Activated CD4-positive, alpha-beta memory T cell treated with anti-CD3 and anti-CD28 coated beads, Interleukin-2, amount 10 ng/mL, durations not matched to agents 7 days and 5 days (primary cell): ENCODE measurements at regions of chr1 and their contacts with region 1.

Region 1: GRCh38 chr1:58652651-58653184 is 47.1 kb downstream of the MYSM1 start:
- DNase-seq: peak; percentile 58
- H3K4me3 Mint-ChIP-seq: no peak overlapping the region
- H3K27ac Mint-ChIP-seq: no peak overlapping the region
- H3K4me1 Mint-ChIP-seq: peaks cover 23% of the 10 kb centered on the region
- H3K27me3 Mint-ChIP-seq: no peaks in the 10 kb centered on the region

Region 2: DNA sequence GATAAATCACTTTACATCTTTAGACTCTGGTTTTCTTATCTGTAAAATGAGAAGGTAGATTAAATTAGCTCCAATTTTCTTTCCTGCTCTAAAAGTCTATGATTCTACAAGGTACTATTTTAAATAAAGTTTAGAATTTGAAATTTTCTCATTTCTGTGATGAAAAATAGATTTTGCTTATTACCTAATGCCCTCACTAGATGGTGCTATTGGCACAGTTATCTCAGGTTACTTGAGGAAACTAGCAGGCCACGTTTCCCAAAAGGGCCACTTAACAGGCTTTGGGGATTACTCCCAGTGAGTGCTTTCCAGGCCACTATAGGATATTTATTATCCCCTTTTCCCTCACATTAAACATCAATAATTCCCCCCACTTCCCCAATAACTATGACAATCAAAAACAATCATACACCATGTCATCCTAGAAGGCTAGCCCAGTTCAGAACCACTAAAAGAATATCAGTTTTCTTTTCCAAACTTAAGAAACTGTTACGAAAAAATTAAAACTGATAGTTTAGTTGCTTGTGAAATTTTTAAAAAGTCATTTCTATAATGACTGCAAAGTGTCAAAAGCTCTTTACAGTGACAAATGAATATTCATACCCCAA is 136.8 kb before region 1 on chr1:
- CTCF ChIA-PET with region 1: interaction called, 42 read pairs
- POLR2A ChIA-PET with region 1: interaction called, 3 read pairs
- DNase-seq: no peak
- H3K4me3 Mint-ChIP-seq: no peak overlapping the region
- H3K27ac Mint-ChIP-seq: no peak overlapping the region
- H3K4me1 Mint-ChIP-seq: peaks cover 13% of the 10 kb centered on the region
- H3K27me3 Mint-ChIP-seq: no peaks in the 10 kb centered on the region

Region 3: DNA sequence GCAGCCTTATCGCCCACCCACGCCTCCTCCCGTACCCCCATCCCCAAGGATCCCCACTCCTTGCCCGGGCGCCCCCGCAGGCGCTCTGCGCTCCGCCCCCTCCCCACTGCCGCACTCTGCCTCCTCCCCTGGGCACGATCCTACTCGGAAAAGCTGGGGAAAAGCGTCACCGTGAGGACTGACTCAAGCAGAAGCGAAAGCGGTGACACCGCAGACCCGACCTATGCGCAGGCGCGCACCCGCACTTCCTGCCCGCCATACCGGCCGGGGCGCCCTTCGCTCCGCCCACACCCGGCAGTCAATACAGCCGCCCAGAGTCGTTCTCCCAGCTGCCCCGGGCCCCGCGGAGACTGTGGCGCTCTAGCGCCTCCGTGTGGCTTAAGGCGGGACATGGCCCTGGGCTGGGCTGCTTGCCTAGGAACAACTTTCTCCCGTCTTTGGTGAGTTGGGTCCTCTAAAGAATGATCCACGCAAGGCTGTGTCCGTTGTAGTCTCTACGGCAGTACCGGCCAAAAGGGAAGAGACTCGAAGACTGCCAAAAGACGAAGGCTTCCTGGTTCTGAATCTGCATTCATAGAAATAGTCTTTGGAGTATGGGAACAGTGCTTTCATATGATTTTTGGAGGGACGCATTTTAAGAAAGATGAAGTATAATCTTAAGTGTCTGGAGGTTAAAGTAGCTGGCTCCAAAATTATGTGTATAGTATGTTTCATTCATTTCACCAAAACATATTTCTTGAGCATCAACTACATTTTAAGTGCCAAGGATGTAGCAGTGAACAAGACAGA is 106.0 kb before region 1 on chr1 and contains the start of gene OMA1:
- CTCF ChIA-PET with region 1: interaction called, 11 read pairs
- POLR2A ChIA-PET with region 1: no interaction called
- DNase-seq: peak; percentile 98
- H3K4me3 Mint-ChIP-seq: peak within 1 kb of the TSS; percentile 90
- H3K27ac Mint-ChIP-seq: peak within 1 kb of the TSS; percentile 92
- H3K4me1 Mint-ChIP-seq: peaks cover 19% of the 10 kb centered on the region
- H3K27me3 Mint-ChIP-seq: peaks cover 17% of the 10 kb centered on the region
- total RNA-seq, gene OMA1: 21.9 to 23.1 TPM

Region 4: GRCh38 chr1:58664881-58665280 is 12.2 kb after region 1 on chr1:
- CTCF ChIA-PET with region 1: interaction called, 17 read pairs
- POLR2A ChIA-PET with region 1: no interaction called
- DNase-seq: no peak
- H3K4me3 Mint-ChIP-seq: no peak overlapping the region
- H3K27ac Mint-ChIP-seq: no peak overlapping the region
- H3K4me1 Mint-ChIP-seq: no peaks in the 10 kb centered on the region
- H3K27me3 Mint-ChIP-seq: no peaks in the 10 kb centered on the region

Region 5: GRCh38 chr1:58687516-58687915 is 34.8 kb after region 1 on chr1:
- CTCF ChIA-PET with region 1: interaction called, 11 read pairs
- POLR2A ChIA-PET with region 1: no interaction called
- DNase-seq: no peak
- H3K4me3 Mint-ChIP-seq: no peak overlapping the region
- H3K27ac Mint-ChIP-seq: no peak overlapping the region
- H3K4me1 Mint-ChIP-seq: no peaks in the 10 kb centered on the region
- H3K27me3 Mint-ChIP-seq: no peaks in the 10 kb centered on the region

Region 6: GRCh38 chr1:58841455-58841854 is 188.7 kb after region 1 on chr1:
- CTCF ChIA-PET with region 1: no interaction called
- POLR2A ChIA-PET with region 1: no interaction called
- DNase-seq: no peak
- H3K4me3 Mint-ChIP-seq: no peak overlapping the region
- H3K27ac Mint-ChIP-seq: no peak overlapping the region
- H3K4me1 Mint-ChIP-seq: no peaks in the 10 kb centered on the region
- H3K27me3 Mint-ChIP-seq: peaks cover 4% of the 10 kb centered on the region

Region 7: GRCh38 chr1:58885998-58886397 is 233.3 kb after region 1 on chr1:
- CTCF ChIA-PET with region 1: no interaction called
- POLR2A ChIA-PET with region 1: no interaction called
- DNase-seq: no peak
- H3K4me3 Mint-ChIP-seq: no peak overlapping the region
- H3K27ac Mint-ChIP-seq: no peak overlapping the region
- H3K4me1 Mint-ChIP-seq: peaks cover 24% of the 10 kb centered on the region
- H3K27me3 Mint-ChIP-seq: peaks cover 1% of the 10 kb centered on the region